ENCODE measurements at regions of chr3 and their contacts with region 1.

Region 1: DNA sequence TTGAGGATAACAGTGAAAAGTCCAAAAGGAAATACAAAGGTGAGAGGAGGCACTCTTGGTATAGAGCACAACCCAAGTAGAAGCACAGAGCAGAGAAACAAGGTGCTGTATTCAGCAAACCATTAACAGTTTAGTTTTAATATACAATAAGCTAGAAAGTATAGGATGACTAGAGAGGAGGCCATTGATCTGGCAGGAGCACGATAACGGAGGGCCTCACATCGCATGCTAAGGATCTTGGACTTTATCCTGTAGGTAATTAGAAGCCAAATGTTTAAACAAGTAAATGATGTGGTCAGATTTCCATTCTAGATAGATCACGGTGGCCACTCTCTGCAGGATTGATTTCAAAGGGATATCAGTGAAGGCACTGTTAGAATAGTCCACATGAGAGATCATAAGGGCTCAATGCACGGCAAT is 935.0 kb downstream of the ROBO1 start:
- DNase-seq: peak; percentile 96
- ATAC-seq: peak; percentile 99
- H3K4me3 ChIP-seq: peak overlapping the region in 1 of 3 experiments; percentile 33; a peak in 2 of 6 replicates
- H3K27ac ChIP-seq: peak overlapping the region; percentile 95
- H3K4me1 ChIP-seq: peaks cover 54% of the 10 kb centered on the region
- H3K27me3 ChIP-seq: no peaks in the 10 kb centered on the region
- CTCF ChIP-seq: no peak
- EP300 ChIP-seq: peak; percentile 69 to 93
- POLR2A ChIP-seq: peak; percentile 27 to 34; a peak in 1 of 4 replicates
- RAD21 ChIP-seq: no peak; the same call in 1 of the 2 replicates

Region 2: GRCh38 chr3:78476076-78476475 is 356.7 kb before region 1 on chr3:
- CTCF ChIA-PET with region 1: no interaction called
- POLR2A ChIA-PET with region 1: no interaction called
- in situ Hi-C with region 1: no loop called
- intact Hi-C with region 1: no loop called
- DNase-seq: no peak
- ATAC-seq: no peak
- H3K4me3 ChIP-seq: no peak overlapping the region
- H3K27ac ChIP-seq: no peak overlapping the region
- H3K4me1 ChIP-seq: no peaks in the 10 kb centered on the region
- H3K27me3 ChIP-seq: peaks cover 2 to 4% of the 10 kb centered on the region in 2 experiments; a peak in 1 of 5 replicates
- CTCF ChIP-seq: no peak
- EP300 ChIP-seq: no peak
- POLR2A ChIP-seq: no peak
- RAD21 ChIP-seq: no peak

Region 3: DNA sequence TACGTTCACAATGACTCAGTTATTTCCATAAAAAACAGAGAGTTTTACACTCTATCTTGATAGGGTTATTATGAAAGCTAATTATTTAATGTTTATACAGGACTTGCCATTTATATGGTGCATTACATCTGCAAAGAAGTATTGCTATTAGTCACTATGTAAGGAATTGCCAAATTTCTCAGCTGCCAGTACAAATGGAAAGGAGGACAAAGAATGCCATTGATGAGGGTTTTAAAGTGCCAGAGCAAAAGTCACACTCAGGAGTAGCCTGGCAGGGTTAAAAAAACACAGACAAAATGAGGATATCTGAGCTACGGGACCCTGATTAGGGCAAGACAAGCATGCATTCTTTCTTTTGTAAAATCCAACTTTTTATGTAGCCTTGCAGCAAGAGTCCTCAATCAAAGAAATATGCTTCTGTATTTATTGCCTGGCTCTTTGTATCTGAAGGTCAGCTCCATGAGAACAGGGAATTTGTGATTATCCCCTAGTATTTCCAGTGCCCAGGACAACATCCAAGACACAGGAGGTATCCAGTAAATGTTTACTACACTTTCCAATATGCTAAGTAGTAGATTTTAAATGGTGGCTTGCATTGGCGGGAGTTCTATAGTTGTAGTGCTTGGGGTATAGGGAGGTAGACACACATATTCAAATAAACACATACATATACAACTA is 78.6 kb before region 1 on chr3:
- CTCF ChIA-PET with region 1: no interaction called
- POLR2A ChIA-PET with region 1: no interaction called
- in situ Hi-C with region 1: no loop called
- intact Hi-C with region 1: loop called (anchors 5 kb)
- DNase-seq: peak; percentile 84
- ATAC-seq: peak; percentile 87
- H3K4me3 ChIP-seq: no peak overlapping the region; a peak in 1 of 6 replicates
- H3K27ac ChIP-seq: peak overlapping the region; percentile 23
- H3K4me1 ChIP-seq: peaks cover 26% of the 10 kb centered on the region
- H3K27me3 ChIP-seq: no peaks in the 10 kb centered on the region
- CTCF ChIP-seq: no peak
- EP300 ChIP-seq: no peak; a peak in 1 of 4 replicates
- POLR2A ChIP-seq: no peak
- RAD21 ChIP-seq: no peak

Region 4: DNA sequence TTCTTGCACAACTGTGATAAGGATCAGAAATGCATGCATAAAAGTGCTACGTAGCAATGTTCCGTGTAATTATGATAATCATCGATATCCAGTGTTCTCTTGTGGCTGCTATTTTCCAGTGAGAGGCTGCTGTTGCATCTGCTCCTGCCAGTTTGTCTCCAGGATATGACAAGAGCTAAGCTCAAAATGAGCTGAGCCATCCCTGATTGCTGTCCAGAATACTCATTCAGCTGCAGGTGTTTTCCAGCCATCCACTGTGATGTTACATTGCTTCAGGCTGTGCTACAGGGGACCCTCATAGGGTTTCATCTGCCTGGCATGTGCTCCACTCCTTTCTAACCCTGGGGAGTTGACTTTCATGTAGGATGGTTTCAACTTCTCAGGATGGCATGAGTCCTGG is 41.0 kb before region 1 on chr3:
- CTCF ChIA-PET with region 1: no interaction called
- POLR2A ChIA-PET with region 1: no interaction called
- in situ Hi-C with region 1: no loop called
- intact Hi-C with region 1: no loop called
- DNase-seq: no peak
- ATAC-seq: no peak
- H3K4me3 ChIP-seq: no peak overlapping the region
- H3K27ac ChIP-seq: no peak overlapping the region
- H3K4me1 ChIP-seq: no peaks in the 10 kb centered on the region; the same call in 1 of the 2 replicates
- H3K27me3 ChIP-seq: no peaks in the 10 kb centered on the region
- CTCF ChIP-seq: no peak
- EP300 ChIP-seq: no peak
- POLR2A ChIP-seq: no peak
- RAD21 ChIP-seq: no peak

Region 5: DNA sequence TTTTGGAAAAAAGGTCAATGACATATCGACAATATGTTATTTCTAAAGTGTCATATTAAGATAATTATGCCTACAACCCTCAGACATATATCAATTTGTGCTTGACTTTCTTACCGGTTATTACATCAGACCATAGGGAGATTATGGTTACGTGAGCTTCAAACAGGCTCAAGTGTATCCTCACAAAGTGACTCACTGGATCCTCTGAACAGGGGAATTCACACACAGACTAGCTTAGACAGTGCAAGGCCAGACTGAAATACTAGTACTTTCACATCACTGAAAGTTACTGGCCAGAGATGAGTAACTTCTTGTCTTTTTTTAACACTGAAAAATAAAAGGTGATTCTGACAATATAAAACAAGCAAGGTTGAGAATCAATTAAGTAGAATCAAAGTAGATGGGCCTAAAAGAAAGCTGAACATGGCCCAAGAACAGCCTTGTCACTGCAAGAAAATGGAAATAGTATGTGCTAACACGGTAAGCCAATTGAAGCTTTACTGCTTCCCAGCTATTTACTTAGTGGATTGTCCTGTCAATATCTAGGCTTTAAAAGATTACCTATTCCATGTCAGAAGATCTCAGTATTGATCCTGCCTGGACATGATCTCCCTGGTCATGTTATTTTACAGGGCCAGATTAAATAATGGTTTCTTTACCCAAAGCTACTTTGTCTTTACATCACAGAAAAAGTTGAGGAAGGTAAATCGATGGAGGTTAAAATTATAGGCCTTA is 86.4 kb after region 1 on chr3:
- CTCF ChIA-PET with region 1: no interaction called
- POLR2A ChIA-PET with region 1: interaction called, 7 read pairs
- in situ Hi-C with region 1: no loop called
- intact Hi-C with region 1: loop called (anchors 5 kb)
- DNase-seq: peak; percentile 73
- ATAC-seq: peak; percentile 96
- H3K4me3 ChIP-seq: no peak overlapping the region
- H3K27ac ChIP-seq: peak overlapping the region; percentile 65
- H3K4me1 ChIP-seq: peaks cover 40% of the 10 kb centered on the region
- H3K27me3 ChIP-seq: no peaks in the 10 kb centered on the region
- CTCF ChIP-seq: no peak
- EP300 ChIP-seq: peak in 1 of 2 experiments; percentile 59; a peak in 2 of 4 replicates
- POLR2A ChIP-seq: no peak
- RAD21 ChIP-seq: no peak

Region 6: DNA sequence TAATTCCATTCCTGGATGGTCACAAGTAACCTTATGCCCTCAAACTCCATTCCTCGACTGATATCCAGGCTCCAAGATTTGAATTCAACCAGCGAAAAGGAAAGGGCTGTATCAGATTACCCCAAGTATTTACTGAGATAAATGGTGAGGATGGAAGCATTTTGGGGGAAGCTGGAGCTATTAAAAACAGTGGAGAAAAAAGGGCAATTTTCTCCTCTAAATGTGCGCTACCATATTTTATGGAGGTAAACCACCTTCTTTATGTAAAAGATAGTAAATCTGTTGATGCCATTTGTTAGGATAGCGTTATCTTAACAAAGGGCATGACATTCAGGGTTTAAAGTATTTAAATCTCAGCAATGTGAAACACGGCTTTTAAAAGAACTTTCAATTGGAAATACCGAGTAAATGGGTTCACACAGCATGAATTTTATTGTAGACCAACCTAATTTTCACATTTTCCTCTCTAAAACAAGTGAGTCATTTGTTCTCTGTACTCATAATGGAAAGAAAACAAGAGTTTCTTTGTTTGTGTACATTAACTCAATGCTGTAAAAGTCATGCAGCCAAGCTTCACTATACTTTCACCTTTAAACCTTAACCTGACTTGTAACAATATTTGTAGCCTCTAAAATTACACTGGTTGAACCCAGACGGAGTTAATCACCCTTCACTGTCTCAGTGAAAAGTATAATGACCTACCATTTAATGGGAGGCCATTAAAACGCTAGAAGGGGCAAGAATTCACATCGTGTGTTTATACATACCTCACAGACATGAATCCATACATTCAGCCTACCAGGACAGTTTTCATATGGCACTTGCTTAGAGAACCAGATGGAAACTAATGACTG is 161.6 kb after region 1 on chr3:
- CTCF ChIA-PET with region 1: no interaction called
- POLR2A ChIA-PET with region 1: no interaction called
- in situ Hi-C with region 1: no loop called
- intact Hi-C with region 1: loop called (anchors 5 kb)
- DNase-seq: peak; percentile 66
- ATAC-seq: peak; percentile 81
- H3K4me3 ChIP-seq: peak overlapping the region; percentile 22 to 42 (median 29); a peak in 5 of 6 replicates
- H3K27ac ChIP-seq: peak overlapping the region; percentile 82
- H3K4me1 ChIP-seq: peaks cover 78% of the 10 kb centered on the region
- H3K27me3 ChIP-seq: no peaks in the 10 kb centered on the region
- CTCF ChIP-seq: no peak
- EP300 ChIP-seq: peak in 1 of 2 experiments; percentile 75; a peak in 2 of 4 replicates
- POLR2A ChIP-seq: no peak
- RAD21 ChIP-seq: no peak

Region 7: DNA sequence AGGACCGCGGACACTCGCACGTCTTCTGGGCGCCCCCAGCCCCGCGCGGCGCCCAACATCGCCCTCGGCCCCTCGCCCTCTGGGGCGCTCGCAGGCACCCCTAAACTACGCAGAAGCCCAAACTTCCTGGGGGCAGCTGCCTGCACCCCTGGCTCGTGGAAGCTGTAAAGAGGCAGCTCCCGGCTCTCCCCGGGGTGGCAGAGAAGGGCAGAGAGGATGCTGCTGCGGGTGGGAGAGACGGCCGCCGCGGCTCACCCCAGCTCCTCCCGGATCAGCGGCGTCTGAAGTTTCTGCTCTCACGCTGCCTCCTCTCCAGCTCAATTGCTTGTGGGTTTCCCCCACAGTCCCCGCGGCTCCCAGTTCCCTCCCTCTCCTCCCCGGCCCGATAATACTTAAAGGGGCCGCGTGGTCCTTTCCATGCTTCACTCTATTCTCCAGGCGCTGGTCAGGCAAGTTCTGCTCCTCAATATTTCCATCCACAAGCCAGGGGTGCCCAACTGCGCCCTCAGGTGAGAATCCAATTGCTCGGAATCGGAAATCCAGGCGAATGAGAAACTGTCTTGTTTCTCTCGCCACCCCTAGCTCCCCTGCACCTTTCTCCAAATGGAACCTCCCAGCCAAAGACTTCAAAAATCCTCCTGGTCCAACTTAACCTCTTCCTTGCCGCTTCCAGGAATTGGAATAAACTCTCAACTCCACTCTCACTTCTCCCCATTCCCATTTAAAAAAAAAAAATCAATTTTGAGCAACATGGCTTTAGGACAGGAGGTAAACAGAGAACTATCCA is 186.5 kb after region 1 on chr3:
- CTCF ChIA-PET with region 1: no interaction called
- POLR2A ChIA-PET with region 1: interaction called, 5 read pairs
- in situ Hi-C with region 1: no loop called
- intact Hi-C with region 1: loop called (anchors 5 kb)
- DNase-seq: peak; percentile 84
- ATAC-seq: peak; percentile 89
- H3K4me3 ChIP-seq: peak overlapping the region; percentile 95 to 98 (median 95)
- H3K27ac ChIP-seq: peak overlapping the region; percentile 98
- H3K4me1 ChIP-seq: peaks cover 18% of the 10 kb centered on the region
- H3K27me3 ChIP-seq: no peaks in the 10 kb centered on the region; a peak in 1 of 5 replicates
- CTCF ChIP-seq: peak; percentile 53
- EP300 ChIP-seq: peak in 1 of 2 experiments; percentile 3; a peak in 1 of 4 replicates
- POLR2A ChIP-seq: peak; percentile 80 to 90
- RAD21 ChIP-seq: no peak

Measured in HepG2 (cell line).